Right lobe of liver (tissue), 6 donors: ENCODE measurements at regions of chr10 and their contacts with region 1.

Region 1: GRCh38 chr10:68348265-68348741 is 15.6 kb upstream of the PBLD start:
- DNase-seq: peak in 1 of 3 donors; percentile 22
- ATAC-seq: peak; percentile 85 to 91 (median 88)
- H3K4me3 ChIP-seq: no peak overlapping the region
- H3K27ac ChIP-seq: no peak overlapping the region
- H3K4me1 ChIP-seq: no peaks in the 10 kb centered on the region
- H3K27me3 ChIP-seq: no peaks in the 10 kb centered on the region
- CTCF ChIP-seq: peak; percentile 48 to 72 (median 68)
- POLR2A ChIP-seq: no peak

Region 2: GRCh38 chr10:68212721-68213352 is 135.5 kb before region 1 on chr10:
- intact Hi-C with region 1: loop called in 1 of 2 experiments (anchors 5 kb)
- DNase-seq: no peak
- ATAC-seq: peak; percentile 37 to 64 (median 57)
- H3K4me3 ChIP-seq: no peak overlapping the region
- H3K27ac ChIP-seq: no peak overlapping the region
- H3K4me1 ChIP-seq: no peaks in the 10 kb centered on the region
- H3K27me3 ChIP-seq: no peaks in the 10 kb centered on the region
- CTCF ChIP-seq: peak; percentile 56 to 66 (median 60)
- POLR2A ChIP-seq: no peak